ENCODE measurements at regions of chr6 and their contacts with region 1.

Region 1: DNA sequence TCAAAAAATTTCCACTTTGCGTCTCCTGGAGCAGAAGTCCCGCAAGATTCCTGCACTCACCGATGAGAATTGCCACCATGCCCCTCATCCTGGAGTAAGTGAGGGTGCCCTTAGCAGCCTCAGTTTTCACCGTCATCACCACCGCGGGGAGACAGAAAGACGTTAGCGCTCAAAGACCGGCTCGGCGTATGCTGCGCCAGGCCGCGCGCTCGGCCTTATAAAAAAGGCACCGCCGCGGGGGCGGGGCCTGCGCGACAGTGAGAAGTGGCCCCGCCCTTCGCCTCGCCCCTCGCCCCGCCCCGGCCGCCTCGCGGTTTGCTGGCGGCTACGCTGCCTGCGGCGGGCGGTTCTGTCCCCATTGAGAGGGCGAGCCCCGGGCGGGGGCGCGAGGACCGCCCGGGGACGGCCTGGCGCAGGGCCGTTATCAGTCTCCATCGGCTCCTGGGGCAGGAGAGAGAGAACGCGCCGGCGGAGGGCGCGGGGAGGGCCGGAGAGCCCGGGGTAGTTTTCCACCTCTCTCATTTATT is 122.3 kb upstream of the SLC2A12 start:
- DNase-seq: peak; percentile 95
- H3K4me3 Mint-ChIP-seq: peak overlapping the region; percentile 97
- H3K27ac Mint-ChIP-seq: peak overlapping the region; percentile 97
- H3K4me1 Mint-ChIP-seq: peaks cover 60% of the 10 kb centered on the region
- H3K27me3 Mint-ChIP-seq: no peaks in the 10 kb centered on the region

Region 2: DNA sequence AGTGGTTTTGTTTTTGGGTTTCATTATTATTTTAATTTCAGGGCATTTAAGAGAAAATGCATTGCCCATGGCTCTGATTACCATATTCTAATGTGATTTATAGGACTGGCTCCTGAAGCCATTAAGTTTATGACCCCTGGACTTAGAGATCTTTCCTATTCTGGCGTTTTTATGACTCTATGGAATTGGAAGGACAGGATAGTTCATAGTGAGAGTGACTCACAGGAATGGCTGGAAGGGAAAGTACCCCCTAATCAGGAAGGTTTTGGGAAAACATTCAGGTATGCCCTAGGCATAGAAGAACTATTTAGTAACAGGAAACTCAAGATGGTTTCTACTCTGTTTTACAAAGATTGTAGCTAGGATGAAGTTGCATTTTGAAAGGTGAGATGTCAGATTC is 13.7 kb before region 1 on chr6:
- CTCF ChIA-PET with region 1: interaction called, 10 read pairs
- intact Hi-C with region 1: no loop called
- DNase-seq: no peak
- H3K4me3 Mint-ChIP-seq: no peak overlapping the region
- H3K27ac Mint-ChIP-seq: no peak overlapping the region
- H3K4me1 Mint-ChIP-seq: peaks cover 4% of the 10 kb centered on the region
- H3K27me3 Mint-ChIP-seq: no peaks in the 10 kb centered on the region

Region 3: DNA sequence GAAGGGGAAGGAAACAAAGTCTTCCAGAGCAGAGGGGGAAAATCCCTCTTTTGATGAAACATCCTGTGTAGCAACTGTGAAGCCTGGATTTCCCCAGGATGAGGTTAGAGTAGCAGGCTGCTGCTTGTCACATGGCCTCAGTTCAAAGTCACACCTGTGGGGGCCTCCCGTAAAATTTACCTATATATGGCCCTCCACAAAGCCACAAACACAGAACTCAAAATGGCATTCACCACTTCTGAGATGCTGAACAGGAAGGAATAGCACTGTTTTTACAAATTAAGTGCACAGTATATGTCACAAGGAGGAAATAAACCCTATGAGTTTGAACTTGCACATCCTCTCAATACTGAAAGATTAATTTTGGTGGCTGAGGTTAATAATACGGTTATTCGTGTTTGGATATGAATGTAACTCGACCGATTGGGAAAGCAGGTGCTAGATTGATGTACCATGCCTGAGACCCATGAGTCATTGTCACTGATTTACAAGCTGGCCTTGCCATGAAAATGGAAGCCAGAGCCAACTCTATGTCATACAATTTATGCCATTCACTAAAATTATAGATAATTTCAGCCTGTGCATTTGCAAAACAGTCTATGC is 72.6 kb after region 1 on chr6:
- CTCF ChIA-PET with region 1: interaction called, 5 read pairs
- intact Hi-C with region 1: loop called (anchors 1 kb)
- DNase-seq: peak; percentile 94
- H3K4me3 Mint-ChIP-seq: peak overlapping the region; percentile 27
- H3K27ac Mint-ChIP-seq: peak overlapping the region; percentile 97
- H3K4me1 Mint-ChIP-seq: peaks cover 58% of the 10 kb centered on the region
- H3K27me3 Mint-ChIP-seq: no peaks in the 10 kb centered on the region

Region 4: GRCh38 chr6:134352786-134353480 is 178.2 kb after region 1 on chr6:
- CTCF ChIA-PET with region 1: interaction called, 3 read pairs
- intact Hi-C with region 1: loop called (anchors 1 kb)
- DNase-seq: peak; percentile 53
- H3K4me3 Mint-ChIP-seq: no peak overlapping the region
- H3K27ac Mint-ChIP-seq: no peak overlapping the region
- H3K4me1 Mint-ChIP-seq: peaks cover 29% of the 10 kb centered on the region
- H3K27me3 Mint-ChIP-seq: no peaks in the 10 kb centered on the region

Region 5: GRCh38 chr6:134436281-134436815 is 261.6 kb after region 1 on chr6:
- CTCF ChIA-PET with region 1: no interaction called
- intact Hi-C with region 1: loop called (anchors 1 kb)
- DNase-seq: peak; percentile 88
- H3K4me3 Mint-ChIP-seq: peak overlapping the region; percentile 44
- H3K27ac Mint-ChIP-seq: peak overlapping the region; percentile 86
- H3K4me1 Mint-ChIP-seq: peaks cover 31% of the 10 kb centered on the region
- H3K27me3 Mint-ChIP-seq: no peaks in the 10 kb centered on the region

Region 6: DNA sequence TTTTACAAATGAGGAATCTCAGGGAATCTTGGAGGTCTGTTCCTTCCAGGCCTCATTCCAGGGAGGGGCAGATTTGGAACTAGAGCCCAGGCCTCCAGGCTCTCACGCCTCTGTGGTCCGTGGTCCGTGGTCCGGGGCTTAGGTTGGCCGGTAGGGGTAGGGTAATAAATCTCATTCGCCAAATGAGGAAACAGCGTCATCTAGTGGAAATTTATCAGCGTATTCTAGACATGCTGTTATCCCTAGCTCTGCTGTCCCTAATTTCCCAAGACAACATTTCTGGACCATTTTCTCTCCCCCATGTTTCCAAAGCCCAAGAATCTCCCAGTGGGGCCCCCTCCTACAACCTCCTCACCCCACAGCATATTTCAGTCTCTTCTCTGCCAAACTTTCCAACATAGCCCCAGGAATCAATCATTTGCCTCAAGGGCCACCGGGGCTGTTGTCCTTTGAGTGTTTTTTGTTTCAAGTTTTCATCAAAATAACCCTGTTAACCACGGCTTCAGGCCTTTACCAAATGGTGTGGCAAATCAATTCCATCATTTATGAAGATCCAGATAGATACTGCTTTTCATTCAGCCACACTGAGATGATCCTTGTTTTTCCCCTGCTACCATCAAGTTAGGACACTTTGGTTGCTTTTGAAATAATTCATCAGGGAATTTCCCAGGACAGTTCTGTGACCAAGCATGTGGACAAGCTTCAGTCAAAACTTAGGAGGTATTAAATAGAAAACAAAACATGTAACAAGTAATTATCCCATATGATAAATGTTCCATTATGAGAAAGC is 648.4 kb after region 1 on chr6:
- CTCF ChIA-PET with region 1: interaction called, 7 read pairs
- intact Hi-C with region 1: loop called (anchors 1 kb)
- DNase-seq: peak; percentile 39
- H3K4me3 Mint-ChIP-seq: no peak overlapping the region
- H3K27ac Mint-ChIP-seq: no peak overlapping the region
- H3K4me1 Mint-ChIP-seq: no peaks in the 10 kb centered on the region
- H3K27me3 Mint-ChIP-seq: no peaks in the 10 kb centered on the region

Region 7: GRCh38 chr6:135054569-135055498 is 880.1 kb after region 1 on chr6 and contains the start of gene HBS1L:
- CTCF ChIA-PET with region 1: no interaction called
- intact Hi-C with region 1: loop called (anchors 1 kb)
- DNase-seq: peak; percentile 98
- H3K4me3 Mint-ChIP-seq: peak within 1 kb of the TSS; percentile 90
- H3K27ac Mint-ChIP-seq: peak within 1 kb of the TSS; percentile 96
- H3K4me1 Mint-ChIP-seq: peaks cover 23% of the 10 kb centered on the region
- H3K27me3 Mint-ChIP-seq: no peaks in the 10 kb centered on the region
- total RNA-seq, gene HBS1L: 150 to 153 TPM

Measured in activated naive CD4-positive, alpha-beta T cell treated with anti-CD3 and anti-CD28 coated beads for 36 hours (primary cell).